Dendritic cell treated with granulocyte-macrophage colony-stimulating factor and Interleukin-4, amounts not matched to agents 40 ng/mL and 50 ng/mL, for 4 days (primary cell): ENCODE measurements at regions of chr20 and their contacts with region 1.

Region 1: GRCh38 chr20:48828022-48828743 is 384 bp upstream of the PREX1 start:
- H3K4me3 Mint-ChIP-seq: peak overlapping the region; percentile 80
- H3K27ac Mint-ChIP-seq: peak overlapping the region; percentile 87
- H3K4me1 Mint-ChIP-seq: peaks cover 49% of the 10 kb centered on the region
- H3K27me3 Mint-ChIP-seq: no peaks in the 10 kb centered on the region

Region 2: DNA sequence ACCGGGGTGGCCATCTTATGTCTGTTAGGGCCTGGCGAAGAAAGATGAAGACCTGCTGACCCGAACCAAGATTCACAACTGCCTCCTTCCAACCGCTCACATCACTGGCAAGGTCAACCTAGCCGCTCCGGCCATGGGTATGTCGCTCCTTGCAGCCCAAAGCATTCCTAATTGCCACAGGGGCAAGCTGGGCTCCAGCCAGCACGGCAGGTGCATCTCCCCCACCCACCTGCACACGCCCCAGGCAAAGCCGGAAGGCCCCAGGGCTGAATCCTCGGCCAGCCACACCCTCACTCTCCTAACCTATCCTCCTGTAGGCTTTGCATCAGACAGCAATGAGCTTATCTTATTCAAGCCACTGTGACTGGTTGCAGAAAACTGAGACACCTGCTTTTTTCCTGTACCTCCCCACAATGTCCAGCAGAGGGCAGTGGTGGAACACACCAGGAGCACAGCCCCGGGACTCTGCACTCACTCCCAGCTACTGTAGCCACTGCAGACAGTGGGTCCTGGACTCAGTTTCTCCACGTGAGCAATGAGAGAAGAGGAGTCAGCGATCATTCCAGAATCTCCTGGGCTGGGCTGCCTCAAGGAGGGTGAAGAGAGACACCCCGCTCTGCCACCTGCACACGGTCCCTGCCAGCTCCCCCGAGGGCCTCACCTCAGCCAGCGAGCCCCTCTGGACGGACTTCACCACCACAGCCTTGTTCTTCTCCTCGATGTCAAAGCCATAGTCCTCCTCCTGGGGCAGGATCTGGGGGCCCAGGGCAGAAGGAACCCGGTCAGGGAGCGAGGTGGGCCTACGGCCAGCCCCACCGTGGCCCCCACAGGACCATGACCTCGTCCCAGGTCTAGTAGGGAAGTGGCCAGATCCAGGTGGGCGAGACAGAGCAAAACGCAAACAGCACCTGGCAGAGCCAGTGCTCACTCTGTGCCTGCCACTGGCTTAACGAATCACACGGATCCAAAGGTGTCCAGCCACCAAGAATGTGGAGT is 170.4 kb before region 1 on chr20:
- intact Hi-C with region 1: loop called (anchors 10 kb)
- H3K4me3 Mint-ChIP-seq: no peak overlapping the region
- H3K27ac Mint-ChIP-seq: peak overlapping the region; percentile 54
- H3K4me1 Mint-ChIP-seq: peaks cover 14% of the 10 kb centered on the region
- H3K27me3 Mint-ChIP-seq: no peaks in the 10 kb centered on the region

Region 3: DNA sequence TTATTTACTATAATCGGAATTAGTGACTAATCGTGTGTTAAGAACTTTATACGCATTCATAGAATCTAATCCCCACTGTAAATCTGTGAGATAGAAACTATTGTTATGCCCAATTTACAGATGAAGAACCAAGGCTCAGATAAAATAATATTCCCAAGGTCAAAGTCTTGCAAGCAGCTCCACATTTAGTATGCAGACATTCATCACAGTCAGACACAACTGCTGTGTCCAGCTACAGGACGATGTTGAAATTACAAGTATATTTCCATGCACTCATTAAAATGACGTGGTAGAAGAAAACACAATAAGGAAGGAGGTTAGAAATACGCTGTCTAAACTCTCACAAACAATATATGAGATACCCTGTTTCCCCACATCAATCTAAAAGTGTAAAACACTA is 82.9 kb before region 1 on chr20:
- intact Hi-C with region 1: no loop called
- H3K4me3 Mint-ChIP-seq: no peak overlapping the region
- H3K27ac Mint-ChIP-seq: no peak overlapping the region
- H3K4me1 Mint-ChIP-seq: peaks cover 34% of the 10 kb centered on the region
- H3K27me3 Mint-ChIP-seq: no peaks in the 10 kb centered on the region

Region 4: DNA sequence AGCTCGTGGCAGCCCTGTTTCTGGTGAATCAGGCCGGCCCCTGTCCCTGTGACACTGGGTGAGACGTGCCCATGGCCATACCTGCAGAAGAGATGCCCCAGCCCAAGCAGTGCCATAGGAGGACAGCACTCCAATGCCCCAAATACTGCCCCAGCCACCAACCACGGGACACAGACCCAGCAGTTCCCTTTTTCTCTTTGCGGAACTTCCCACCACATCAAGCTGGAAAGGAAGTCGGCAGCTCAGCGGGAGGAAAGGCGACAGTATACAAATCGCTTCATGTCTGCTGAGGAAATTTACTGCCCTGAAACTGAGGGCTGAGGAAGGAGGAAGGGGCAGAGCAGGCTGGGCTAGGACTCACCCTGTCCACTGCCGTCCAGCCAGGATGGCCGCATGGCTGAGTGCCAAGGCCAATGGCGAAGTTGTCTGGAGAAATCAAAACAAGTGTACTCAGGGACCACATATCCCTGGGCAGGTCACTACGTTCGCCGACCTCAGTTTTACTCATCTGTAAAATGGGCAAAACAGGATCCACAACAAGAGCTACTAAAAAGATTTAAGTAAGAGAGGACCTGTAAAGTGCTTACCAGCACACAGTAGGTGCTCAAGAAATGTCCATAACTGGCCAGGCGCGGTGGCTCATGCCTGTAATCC is 55.7 kb before region 1 on chr20:
- intact Hi-C with region 1: loop called (anchors 5 kb)
- H3K4me3 Mint-ChIP-seq: no peak overlapping the region
- H3K27ac Mint-ChIP-seq: peak overlapping the region; percentile 62
- H3K4me1 Mint-ChIP-seq: peaks cover 100% of the 10 kb centered on the region
- H3K27me3 Mint-ChIP-seq: no peaks in the 10 kb centered on the region

Region 5: GRCh38 chr20:48846498-48847485 is 18.6 kb after region 1 on chr20:
- intact Hi-C with region 1: loop called (anchors 2 kb)
- H3K4me3 Mint-ChIP-seq: peak overlapping the region; percentile 20
- H3K27ac Mint-ChIP-seq: peak overlapping the region; percentile 82
- H3K4me1 Mint-ChIP-seq: peaks cover 68% of the 10 kb centered on the region
- H3K27me3 Mint-ChIP-seq: peaks cover 2% of the 10 kb centered on the region

Region 6: DNA sequence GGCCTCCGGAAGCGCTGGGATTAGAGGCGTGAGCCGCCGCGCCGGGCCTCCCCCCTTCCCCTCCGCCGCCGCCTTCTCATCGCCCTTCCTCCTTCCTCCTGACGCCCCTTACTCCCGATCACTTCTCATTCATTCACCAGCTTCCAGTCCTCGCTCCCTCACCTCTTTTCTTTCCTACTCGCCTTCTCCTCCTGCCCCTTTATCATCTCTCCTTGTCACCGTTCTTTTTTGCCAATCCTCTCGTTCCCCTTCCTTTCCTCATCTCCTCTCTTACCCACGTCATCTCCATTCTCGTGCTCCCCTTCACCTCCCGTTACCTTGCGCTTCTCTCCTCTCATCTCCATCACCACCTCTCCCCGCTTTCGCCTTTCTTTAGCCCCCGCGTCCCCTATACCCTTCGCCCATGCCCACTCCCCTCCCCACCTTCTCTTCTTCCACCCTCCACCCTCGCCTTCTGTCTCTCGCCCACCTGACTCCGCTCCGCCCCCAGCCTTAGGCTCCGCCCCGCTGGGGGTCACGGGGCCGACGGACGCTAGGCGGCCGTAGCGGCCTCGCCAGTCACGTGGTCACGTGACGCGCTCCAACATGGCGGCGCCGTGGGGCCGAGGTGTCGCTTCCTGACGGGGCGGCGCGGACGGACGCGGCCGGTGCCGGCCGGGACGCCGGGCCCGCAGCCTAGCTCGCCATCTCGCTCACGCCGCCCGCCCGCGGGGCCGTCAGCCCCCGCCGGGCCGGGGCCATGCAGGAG is 93.1 kb after region 1 on chr20 and contains the start of gene ARFGEF2:
- intact Hi-C with region 1: loop called (anchors 5 kb)
- H3K4me3 Mint-ChIP-seq: peak within 1 kb of the TSS; percentile 94
- H3K27ac Mint-ChIP-seq: peak within 1 kb of the TSS; percentile 89
- H3K4me1 Mint-ChIP-seq: peaks cover 52% of the 10 kb centered on the region
- H3K27me3 Mint-ChIP-seq: no peaks in the 10 kb centered on the region